Activated T-helper 2 cell treated with anti-CD3 and anti-CD28 coated beads, Interferon-gamma antibody, Interleukin-2, Interleukin-4, amounts not matched to agents 10 μg/mL and 5 μg/mL and 100 μg/mL, durations not matched to agents 14 hours and 24 hours and 36 hours (primary cell): ENCODE measurements at regions of chr10 and their contacts with region 1.

Region 1: DNA sequence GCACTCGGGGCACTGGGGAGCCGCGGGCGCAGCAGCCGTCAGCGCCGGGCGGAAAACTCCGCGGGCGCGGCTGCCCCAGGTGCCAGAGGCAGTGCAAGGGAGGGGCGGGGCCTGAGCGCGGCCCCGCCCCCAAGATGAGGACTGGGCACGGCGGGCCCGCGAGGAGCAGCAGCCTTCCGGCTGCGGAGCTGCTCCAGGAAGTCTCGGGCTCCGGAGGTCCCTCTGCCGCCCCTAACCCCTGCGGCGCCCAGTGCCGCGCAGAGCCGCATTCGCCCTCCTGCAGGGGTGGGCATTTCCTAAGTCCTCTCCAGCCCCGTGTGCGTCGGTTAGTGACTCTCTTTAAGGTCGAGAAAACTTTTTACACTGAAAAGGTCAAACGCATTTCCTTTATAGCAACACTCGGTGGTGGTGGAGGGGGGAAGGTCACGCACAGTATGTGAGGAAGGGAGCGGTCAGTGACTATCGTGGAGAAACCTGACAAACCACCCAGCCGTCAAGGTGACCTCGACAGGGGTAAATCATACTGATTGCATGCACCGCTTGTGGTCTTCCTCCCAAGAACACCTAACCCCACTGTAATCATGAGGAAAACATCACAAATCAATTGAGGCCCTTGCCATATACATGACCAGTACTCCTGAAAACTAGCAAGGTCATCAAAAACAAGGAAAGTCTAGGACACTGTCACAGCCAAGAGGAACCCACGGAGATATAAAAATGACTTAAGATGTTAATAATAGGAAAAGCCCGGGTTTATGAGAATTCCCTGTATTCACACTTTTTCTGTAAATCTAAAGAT is at the start of gene ANXA11:
- DNase-seq: peak; percentile 76
- H3K4me3 Mint-ChIP-seq: peak within 1 kb of the TSS; percentile 97
- H3K27ac Mint-ChIP-seq: peak within 1 kb of the TSS; percentile 86
- H3K4me1 Mint-ChIP-seq: peaks cover 45% of the 10 kb centered on the region
- H3K27me3 Mint-ChIP-seq: no peaks in the 10 kb centered on the region
- total RNA-seq, gene ANXA11: 251 and 264 TPM in 2 replicates

Region 2: GRCh38 chr10:79331709-79332108 is 874.0 kb before region 1 on chr10:
- intact Hi-C with region 1: loop called (anchors 10 kb)
- DNase-seq: peak; percentile 71
- H3K4me3 Mint-ChIP-seq: peak overlapping the region; percentile 11
- H3K27ac Mint-ChIP-seq: peak overlapping the region; percentile 90
- H3K4me1 Mint-ChIP-seq: peaks cover 37% of the 10 kb centered on the region
- H3K27me3 Mint-ChIP-seq: no peaks in the 10 kb centered on the region

Region 3: GRCh38 chr10:80078448-80079311 is 127.0 kb before region 1 on chr10 and contains the start of gene TMEM254:
- intact Hi-C with region 1: loop called (anchors 1 kb)
- DNase-seq: peak; percentile 82
- H3K4me3 Mint-ChIP-seq: peak within 1 kb of the TSS; percentile 96
- H3K27ac Mint-ChIP-seq: peak within 1 kb of the TSS; percentile 91
- H3K4me1 Mint-ChIP-seq: peaks cover 30% of the 10 kb centered on the region
- H3K27me3 Mint-ChIP-seq: no peaks in the 10 kb centered on the region
- total RNA-seq, gene TMEM254: 11.4 and 12.6 TPM in 2 replicates

Region 4: GRCh38 chr10:80154975-80155695 is 50.5 kb before region 1 on chr10:
- intact Hi-C with region 1: loop called (anchors 5 kb)
- DNase-seq: no peak
- H3K4me3 Mint-ChIP-seq: no peak overlapping the region
- H3K27ac Mint-ChIP-seq: peak overlapping the region; percentile 66
- H3K4me1 Mint-ChIP-seq: peaks cover 17% of the 10 kb centered on the region
- H3K27me3 Mint-ChIP-seq: no peaks in the 10 kb centered on the region

Region 5: DNA sequence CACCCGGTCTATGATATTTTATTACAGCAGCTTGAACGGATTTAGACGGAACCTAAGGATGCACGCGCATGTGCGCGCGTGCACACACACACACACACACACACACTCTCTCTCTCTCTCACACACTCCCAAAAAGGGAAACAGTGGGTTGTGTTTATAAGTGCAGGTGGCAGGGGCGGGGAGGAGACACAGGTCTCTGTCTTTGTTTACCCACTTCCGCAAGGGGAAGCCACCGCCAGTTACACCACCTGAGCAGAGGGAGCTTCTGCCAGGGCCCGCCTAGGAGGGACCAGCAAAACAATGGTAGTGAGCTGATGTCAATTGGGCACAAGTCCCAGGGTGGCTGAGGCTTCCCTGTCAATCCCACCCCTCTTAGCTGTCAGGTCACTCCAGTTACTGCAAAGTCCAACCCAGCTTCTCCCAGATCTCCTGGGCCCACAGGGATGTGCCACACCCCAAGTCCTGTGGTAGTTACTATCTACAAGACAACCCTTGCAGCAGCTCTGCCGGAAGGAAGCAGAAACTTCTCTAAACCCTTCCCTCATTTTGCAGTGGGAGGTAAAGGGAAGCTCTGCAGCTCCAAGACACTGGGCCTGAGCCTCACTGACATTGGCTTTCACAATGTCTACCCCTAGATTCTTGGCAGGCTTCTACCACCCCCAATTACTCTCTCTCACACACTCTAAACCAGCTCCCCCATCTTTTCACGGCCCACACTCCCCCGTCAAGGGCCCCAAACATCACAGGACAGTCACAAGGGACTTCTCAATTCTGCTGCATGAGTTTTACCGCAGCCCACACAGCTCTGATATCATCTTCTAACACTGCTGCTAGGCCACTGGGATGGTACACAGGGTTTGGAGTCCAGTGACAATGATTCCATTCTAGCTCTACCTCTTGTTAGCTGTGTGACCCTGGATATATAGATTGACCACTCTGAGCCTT is 17.9 kb before region 1 on chr10:
- intact Hi-C with region 1: loop called (anchors 1 kb)
- DNase-seq: peak; percentile 81
- H3K4me3 Mint-ChIP-seq: peak overlapping the region; percentile 70
- H3K27ac Mint-ChIP-seq: peak overlapping the region; percentile 92
- H3K4me1 Mint-ChIP-seq: peaks cover 71% of the 10 kb centered on the region
- H3K27me3 Mint-ChIP-seq: no peaks in the 10 kb centered on the region

Region 6: GRCh38 chr10:80253266-80254245 is 47.9 kb after region 1 on chr10:
- intact Hi-C with region 1: loop called (anchors 5 kb)
- DNase-seq: no peak
- H3K4me3 Mint-ChIP-seq: peak overlapping the region; percentile 49
- H3K27ac Mint-ChIP-seq: peak overlapping the region; percentile 75
- H3K4me1 Mint-ChIP-seq: peaks cover 18% of the 10 kb centered on the region
- H3K27me3 Mint-ChIP-seq: peaks cover 2% of the 10 kb centered on the region

Region 7: DNA sequence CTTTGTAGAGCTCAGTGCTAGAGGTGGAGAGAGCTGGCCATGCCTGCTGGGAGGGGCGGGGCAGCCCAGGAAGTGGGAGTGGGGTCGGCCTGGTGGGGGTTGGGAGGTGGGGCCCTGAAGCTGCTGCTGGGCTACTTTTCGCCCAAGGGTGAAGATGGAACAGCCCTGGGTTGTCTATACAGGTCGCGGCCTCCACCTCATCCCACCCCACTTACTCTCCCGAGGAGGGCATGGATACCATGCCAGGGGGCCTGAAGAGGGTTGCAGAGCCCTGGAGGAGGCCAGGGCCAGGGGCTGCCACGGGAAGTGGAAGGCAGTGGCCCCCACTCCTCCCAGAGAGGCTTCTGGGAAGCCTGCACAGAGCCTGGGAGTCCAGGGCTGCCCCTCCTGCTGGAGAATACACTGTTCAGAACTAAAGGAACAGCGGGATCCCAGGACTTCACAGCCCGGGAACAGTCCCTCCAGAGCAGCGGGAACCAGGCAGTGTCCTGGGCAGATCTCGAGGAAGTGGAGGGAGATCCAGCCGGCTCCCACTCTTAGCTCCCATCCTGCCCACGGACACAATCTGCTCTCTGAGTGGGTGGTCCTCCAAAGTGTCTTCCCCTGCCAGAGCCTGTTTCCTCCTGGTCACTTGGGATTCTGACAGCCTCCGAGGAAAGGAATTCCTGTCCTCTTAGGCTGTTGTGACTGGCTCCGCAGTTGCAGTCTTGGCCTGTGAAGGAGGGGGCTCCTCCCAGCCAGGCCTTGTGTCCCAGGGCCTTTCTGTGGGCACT is 60.2 kb after region 1 on chr10:
- intact Hi-C with region 1: no loop called
- DNase-seq: no peak
- H3K4me3 Mint-ChIP-seq: no peak overlapping the region
- H3K27ac Mint-ChIP-seq: no peak overlapping the region
- H3K4me1 Mint-ChIP-seq: no peaks in the 10 kb centered on the region
- H3K27me3 Mint-ChIP-seq: peaks cover 13% of the 10 kb centered on the region

Region 8: DNA sequence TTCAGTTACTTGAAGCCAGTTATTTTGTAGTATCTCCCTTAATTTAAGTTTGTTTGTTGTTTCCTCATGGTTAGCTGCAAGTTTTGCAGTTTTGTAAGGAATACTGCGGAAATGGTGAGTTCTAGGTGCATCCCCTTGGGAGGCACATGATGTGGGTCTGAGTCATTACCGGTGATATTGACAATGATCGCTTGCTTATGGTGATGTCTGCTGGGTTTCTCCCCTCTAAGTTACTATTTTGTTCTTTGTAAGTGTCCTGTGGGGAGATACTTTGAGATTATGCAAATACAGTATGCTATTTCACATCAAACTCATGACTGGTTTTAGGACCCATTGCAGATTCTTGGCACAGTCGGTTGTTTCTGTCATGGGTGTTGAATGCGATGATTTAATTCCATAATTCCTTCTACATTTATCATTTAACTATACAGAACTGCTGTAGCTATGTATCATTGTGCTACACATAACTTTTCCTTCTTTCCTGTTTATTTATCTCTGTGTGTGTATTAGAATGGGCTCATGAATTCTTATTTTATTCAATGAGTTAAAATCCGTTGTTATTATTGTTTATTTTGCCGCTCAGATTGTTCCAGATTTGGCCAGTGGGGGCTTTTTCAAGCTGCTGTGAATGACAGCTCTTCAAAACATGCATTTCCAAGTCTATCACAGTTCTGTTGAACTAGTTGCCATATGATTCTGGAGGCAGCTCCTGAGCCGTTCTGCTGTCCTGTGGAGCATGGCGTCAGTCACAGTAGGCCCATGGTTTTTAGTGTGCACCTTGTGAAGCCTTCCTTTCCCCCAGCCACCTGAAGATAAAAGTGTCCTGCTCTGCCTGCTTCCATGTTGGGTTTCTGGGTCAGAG is 266.8 kb after region 1 on chr10:
- intact Hi-C with region 1: loop called (anchors 5 kb)
- DNase-seq: no peak
- H3K4me3 Mint-ChIP-seq: peak overlapping the region; percentile 60
- H3K27ac Mint-ChIP-seq: peak overlapping the region; percentile 92
- H3K4me1 Mint-ChIP-seq: peaks cover 74% of the 10 kb centered on the region
- H3K27me3 Mint-ChIP-seq: no peaks in the 10 kb centered on the region